Thyroid gland (tissue), 4 donors: ENCODE measurements at regions of chr2 and their contacts with region 1.

Region 1: DNA sequence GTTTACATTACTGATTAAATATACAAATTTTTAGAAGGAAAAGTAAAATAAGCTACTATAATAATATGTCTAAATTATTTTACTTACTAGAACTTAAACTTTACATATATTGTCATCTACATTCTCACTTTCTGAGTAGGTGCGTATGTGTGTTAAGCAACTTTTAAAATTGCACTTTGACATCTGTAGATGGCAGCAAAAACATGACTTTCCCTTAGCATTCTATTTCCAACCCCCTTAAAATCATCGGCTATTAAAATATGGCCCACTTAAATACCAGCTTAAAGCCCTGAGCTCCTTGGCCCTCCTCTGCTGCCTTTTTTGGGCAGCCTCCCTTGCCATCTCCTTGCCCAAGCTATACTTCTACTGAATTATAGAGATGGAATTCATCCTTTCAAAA is 78.0 kb downstream of the UPP2 start:
- DNase-seq: no peak
- H3K4me3 ChIP-seq: no peak overlapping the region
- H3K27ac ChIP-seq: no peak overlapping the region
- H3K4me1 ChIP-seq: peaks cover 9 to 37% of the 10 kb centered on the region in 2 donors
- H3K27me3 ChIP-seq: no peaks in the 10 kb centered on the region
- CTCF ChIP-seq: peak in 3 of 6 experiments; percentile 53 to 60 (median 57)
- POLR2A ChIP-seq: no peak

Region 2: GRCh38 chr2:157952558-157952957 is 227.1 kb before region 1 on chr2:
- intact Hi-C with region 1: no loop called
- DNase-seq: peak; percentile 61 to 72
- H3K4me3 ChIP-seq: no peak overlapping the region
- H3K27ac ChIP-seq: no peak overlapping the region
- H3K4me1 ChIP-seq: peaks cover 7 to 11% of the 10 kb centered on the region in 2 donors
- H3K27me3 ChIP-seq: no peaks in the 10 kb centered on the region
- CTCF ChIP-seq: no peak
- POLR2A ChIP-seq: no peak

Region 3: GRCh38 chr2:158456309-158457066 is 276.8 kb after region 1 on chr2 and contains the starts of genes CCDC148 and PKP4:
- intact Hi-C with region 1: loop called (anchors 5 kb)
- DNase-seq: peak; percentile 93 to 94
- H3K4me3 ChIP-seq: peak within 1 kb of the TSS; percentile 89 to 93 (median 89)
- H3K27ac ChIP-seq: peak within 1 kb of the TSS; percentile 90 to 100 (median 97)
- H3K4me1 ChIP-seq: peaks cover 17 to 23% of the 10 kb centered on the region in 2 donors
- H3K27me3 ChIP-seq: no peaks in the 10 kb centered on the region
- CTCF ChIP-seq: peak in 4 of 6 experiments; percentile 5 to 55 (median 33)
- POLR2A ChIP-seq: peak; percentile 77 to 91
- total RNA-seq, gene CCDC148: 4.6 to 10.7 (median 7.4) TPM
- total RNA-seq, gene PKP4: 117 to 155 (median 136) TPM

Region 4: GRCh38 chr2:158745044-158745865 is 565.6 kb after region 1 on chr2:
- intact Hi-C with region 1: loop called (anchors 10 kb)
- DNase-seq: peak; percentile 74 to 77
- H3K4me3 ChIP-seq: no peak overlapping the region
- H3K27ac ChIP-seq: no peak overlapping the region
- H3K4me1 ChIP-seq: peaks cover 7 to 32% of the 10 kb centered on the region in 2 donors
- H3K27me3 ChIP-seq: no peaks in the 10 kb centered on the region
- CTCF ChIP-seq: peak in 5 of 6 experiments; percentile 32 to 89 (median 67)
- POLR2A ChIP-seq: no peak